ENCODE measurements at regions of chr1 and their contacts with region 1.

Region 1: DNA sequence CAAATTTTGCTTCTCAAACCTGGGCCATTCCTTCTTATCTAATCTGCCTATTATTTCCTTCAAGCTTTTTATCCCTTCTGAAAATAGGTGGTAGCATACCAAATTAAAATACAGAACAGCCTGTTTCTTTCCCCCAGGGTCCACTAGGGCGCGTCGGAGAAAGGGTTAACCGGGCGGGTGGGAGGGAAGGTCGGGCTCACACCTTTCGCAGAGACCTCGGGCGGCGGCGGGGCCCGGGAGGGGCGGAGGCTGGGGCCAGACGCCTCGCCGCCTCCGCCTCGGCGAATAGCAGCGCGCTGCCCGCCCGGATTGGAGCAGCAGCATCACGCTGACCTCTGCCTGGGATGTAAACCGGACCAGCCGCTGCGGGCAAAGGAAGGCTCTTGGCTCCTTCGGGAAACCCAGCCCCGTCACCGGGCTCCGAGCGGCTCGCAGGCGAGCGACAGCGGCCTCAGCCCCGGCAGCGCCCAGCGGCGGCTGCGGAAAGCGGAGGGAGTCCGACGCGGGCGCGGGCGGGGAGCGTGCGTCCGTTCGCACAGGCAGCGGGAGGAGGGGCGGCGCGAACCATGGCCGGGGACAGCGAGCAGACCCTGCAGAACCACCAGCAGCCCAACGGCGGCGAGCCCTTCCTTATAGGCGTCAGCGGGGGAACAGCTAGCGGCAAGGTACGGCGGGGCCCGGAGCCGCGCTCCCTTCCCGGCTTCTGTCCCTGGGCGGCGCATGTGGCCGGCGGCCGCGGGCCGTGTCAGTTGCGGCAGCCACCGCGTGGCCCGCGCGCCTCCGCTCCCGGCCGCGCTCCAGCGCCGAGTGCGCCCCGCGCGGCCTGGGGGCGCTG is at the start of gene UCK2:
- DNase-seq: peak; percentile 62
- H3K4me3 Mint-ChIP-seq: peak within 1 kb of the TSS; percentile 93
- H3K27ac Mint-ChIP-seq: peak within 1 kb of the TSS; percentile 88
- H3K4me1 Mint-ChIP-seq: peaks cover 13% of the 10 kb centered on the region
- H3K27me3 Mint-ChIP-seq: peaks cover 3% of the 10 kb centered on the region
- total RNA-seq, gene UCK2: 58.8 to 61.5 TPM

Region 2: GRCh38 chr1:165416876-165417275 is 410.6 kb before region 1 on chr1:
- CTCF ChIA-PET with region 1: no interaction called
- intact Hi-C with region 1: no loop called
- DNase-seq: no peak
- H3K4me3 Mint-ChIP-seq: no peak overlapping the region
- H3K27ac Mint-ChIP-seq: no peak overlapping the region
- H3K4me1 Mint-ChIP-seq: no peaks in the 10 kb centered on the region
- H3K27me3 Mint-ChIP-seq: peaks cover 8% of the 10 kb centered on the region

Region 3: GRCh38 chr1:165630629-165631341 is 196.7 kb before region 1 on chr1 and contains the start of gene MGST3:
- CTCF ChIA-PET with region 1: no interaction called
- intact Hi-C with region 1: loop called (anchors 1 kb)
- DNase-seq: peak; percentile 97
- H3K4me3 Mint-ChIP-seq: no peak within 1 kb of the TSS
- H3K27ac Mint-ChIP-seq: no peak within 1 kb of the TSS
- H3K4me1 Mint-ChIP-seq: peaks cover 19% of the 10 kb centered on the region
- H3K27me3 Mint-ChIP-seq: no peaks in the 10 kb centered on the region
- total RNA-seq, gene MGST3: 26.6 to 29.2 TPM

Region 4: GRCh38 chr1:165768513-165769394 is 58.7 kb before region 1 on chr1 and contains the start of gene TMCO1:
- CTCF ChIA-PET with region 1: no interaction called
- intact Hi-C with region 1: loop called (anchors 1 kb)
- DNase-seq: peak; percentile 96
- H3K4me3 Mint-ChIP-seq: peak within 1 kb of the TSS; percentile 98
- H3K27ac Mint-ChIP-seq: peak within 1 kb of the TSS; percentile 97
- H3K4me1 Mint-ChIP-seq: peaks cover 49% of the 10 kb centered on the region
- H3K27me3 Mint-ChIP-seq: no peaks in the 10 kb centered on the region
- total RNA-seq, gene TMCO1: 50.5 to 50.7 TPM

Region 5: DNA sequence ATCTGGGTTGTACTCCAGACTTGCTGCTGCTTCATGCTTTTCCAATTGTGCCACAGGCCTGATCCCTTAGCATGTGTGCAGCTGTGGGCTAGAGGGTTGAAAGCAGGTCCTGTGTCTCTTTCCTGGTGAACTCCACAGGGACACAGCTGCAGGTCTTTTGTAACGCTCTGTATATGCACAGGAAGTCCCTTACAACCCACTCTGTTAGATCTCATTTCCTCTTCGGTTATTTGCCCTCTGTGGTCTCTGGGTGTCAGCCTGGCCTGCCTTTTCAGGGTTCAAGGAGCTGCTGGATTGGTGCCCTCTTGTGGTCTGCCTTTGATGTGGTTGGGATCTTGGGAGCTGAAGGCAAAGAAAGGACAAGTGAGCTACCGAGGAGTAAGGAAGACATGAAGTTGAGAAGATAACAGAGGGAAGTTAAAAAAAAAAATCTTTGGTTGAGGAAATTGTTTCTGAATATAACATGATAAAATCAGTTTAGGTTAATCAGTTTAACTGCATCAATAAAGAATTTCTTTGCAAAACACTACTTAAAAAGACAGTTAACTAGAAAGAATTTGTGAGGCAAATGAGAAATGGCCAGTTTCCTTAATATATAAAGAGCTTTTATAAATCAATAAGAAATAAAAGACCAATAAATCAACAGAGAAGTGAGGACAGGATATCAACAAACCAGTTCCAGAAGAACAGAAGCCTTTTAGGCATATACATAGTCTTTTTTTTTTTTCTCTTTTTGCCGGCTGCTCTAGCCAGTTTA is 44.0 kb after region 1 on chr1:
- CTCF ChIA-PET with region 1: interaction called, 3 read pairs
- intact Hi-C with region 1: loop called (anchors 1 kb)
- DNase-seq: peak; percentile 83
- H3K4me3 Mint-ChIP-seq: no peak overlapping the region
- H3K27ac Mint-ChIP-seq: no peak overlapping the region
- H3K4me1 Mint-ChIP-seq: peaks cover 47% of the 10 kb centered on the region
- H3K27me3 Mint-ChIP-seq: peaks cover 1% of the 10 kb centered on the region

Region 6: DNA sequence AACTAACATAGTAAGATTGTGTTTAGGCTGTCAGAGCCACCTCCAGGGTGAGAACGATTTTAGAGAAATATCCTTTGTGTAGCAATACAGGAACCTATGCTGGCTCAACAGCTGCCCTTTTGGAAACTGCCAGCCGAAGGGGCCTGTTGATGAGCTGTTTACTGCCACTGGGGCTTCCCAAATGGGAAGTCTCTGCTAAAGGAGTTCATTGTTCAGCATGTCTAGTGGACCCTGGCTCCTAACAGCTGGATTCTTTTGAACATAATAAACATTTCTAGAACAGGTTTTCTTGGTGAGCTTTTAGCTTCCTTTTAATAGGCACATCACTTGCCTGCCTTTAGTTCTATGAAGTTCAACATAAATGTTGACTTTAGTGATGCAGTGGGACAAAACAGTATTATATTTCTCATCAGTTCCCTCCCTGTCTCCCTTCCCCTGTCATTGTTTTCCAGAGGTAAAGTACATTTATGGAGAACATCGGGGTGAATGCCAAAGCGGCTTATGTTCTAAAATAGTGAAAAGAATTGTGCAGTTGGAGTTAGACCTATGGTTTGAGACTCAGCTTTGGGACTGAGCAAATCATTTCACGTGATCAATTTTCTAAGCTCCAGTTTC is 57.3 kb after region 1 on chr1:
- CTCF ChIA-PET with region 1: no interaction called
- intact Hi-C with region 1: no loop called
- DNase-seq: no peak
- H3K4me3 Mint-ChIP-seq: no peak overlapping the region
- H3K27ac Mint-ChIP-seq: no peak overlapping the region
- H3K4me1 Mint-ChIP-seq: peaks cover 4% of the 10 kb centered on the region
- H3K27me3 Mint-ChIP-seq: no peaks in the 10 kb centered on the region

Region 7: GRCh38 chr1:165914136-165914798 is 86.8 kb after region 1 on chr1:
- CTCF ChIA-PET with region 1: interaction called, 3 read pairs
- intact Hi-C with region 1: loop called (anchors 10 kb)
- DNase-seq: peak; percentile 82
- H3K4me3 Mint-ChIP-seq: no peak overlapping the region
- H3K27ac Mint-ChIP-seq: no peak overlapping the region
- H3K4me1 Mint-ChIP-seq: no peaks in the 10 kb centered on the region
- H3K27me3 Mint-ChIP-seq: no peaks in the 10 kb centered on the region

Region 8: GRCh38 chr1:166838766-166839599 is 1011.5 kb after region 1 on chr1 and contains the start of gene POGK:
- CTCF ChIA-PET with region 1: no interaction called
- intact Hi-C with region 1: loop called (anchors 10 kb)
- DNase-seq: peak; percentile 91
- H3K4me3 Mint-ChIP-seq: peak within 1 kb of the TSS; percentile 95
- H3K27ac Mint-ChIP-seq: peak within 1 kb of the TSS; percentile 96
- H3K4me1 Mint-ChIP-seq: peaks cover 46% of the 10 kb centered on the region
- H3K27me3 Mint-ChIP-seq: no peaks in the 10 kb centered on the region
- total RNA-seq, gene POGK: 33.1 to 34.9 TPM